ENCODE measurements at regions of chr1 and their contacts with region 1.

Region 1: GRCh38 chr1:186076006-186076405 is 299.0 kb downstream of the TPR start:
- DNase-seq: no peak
- H3K4me3 ChIP-seq: no peak overlapping the region
- H3K27ac ChIP-seq: no peak overlapping the region
- H3K27me3 ChIP-seq: no peaks in the 10 kb centered on the region
- CTCF ChIP-seq: no peak

Region 2: DNA sequence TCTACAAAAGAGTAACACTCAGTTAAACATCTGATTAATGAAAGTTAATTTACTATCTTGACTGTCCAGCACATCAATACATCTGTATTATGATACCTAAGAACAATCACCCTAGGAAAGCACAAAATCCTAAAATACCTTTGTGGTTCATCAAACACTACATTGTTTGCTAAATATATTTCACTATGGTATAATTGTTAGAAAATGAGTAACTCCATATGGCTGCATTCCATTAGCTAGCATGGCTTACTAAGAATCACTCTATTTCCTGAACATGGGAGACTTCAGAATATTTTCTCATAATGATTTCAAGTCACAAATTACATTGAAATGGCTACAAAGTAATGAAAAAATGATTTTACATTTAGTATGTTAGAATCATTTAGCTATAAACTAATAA is 931.8 kb before region 1 on chr1:
- CTCF ChIA-PET with region 1: interaction called, 12 read pairs
- POLR2A ChIA-PET with region 1: no interaction called
- DNase-seq: peak; percentile 10
- H3K4me3 ChIP-seq: no peak overlapping the region
- H3K27ac ChIP-seq: no peak overlapping the region
- H3K27me3 ChIP-seq: no peaks in the 10 kb centered on the region
- CTCF ChIP-seq: no peak

Region 3: DNA sequence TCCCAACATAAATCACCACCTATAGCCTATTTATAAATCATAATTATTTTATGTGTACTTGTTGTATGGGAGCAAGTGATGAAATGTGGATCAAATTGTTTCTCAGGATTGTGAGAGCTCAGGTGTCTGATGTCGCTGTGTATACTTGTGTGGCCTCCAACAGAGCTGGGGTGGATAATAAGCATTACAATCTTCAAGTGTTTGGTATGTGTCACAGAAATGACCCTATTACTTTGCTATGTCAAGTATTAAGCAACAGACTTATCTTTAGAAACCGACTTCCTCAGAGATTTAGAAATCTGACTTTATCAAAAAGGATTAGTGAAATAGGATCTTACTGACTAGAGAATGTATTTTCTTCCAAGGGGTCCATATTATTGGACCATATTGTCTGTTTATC is 18.2 kb after region 1 on chr1:
- CTCF ChIA-PET with region 1: no interaction called
- POLR2A ChIA-PET with region 1: no interaction called
- DNase-seq: no peak
- H3K4me3 ChIP-seq: no peak overlapping the region
- H3K27ac ChIP-seq: no peak overlapping the region
- H3K27me3 ChIP-seq: no peaks in the 10 kb centered on the region
- CTCF ChIP-seq: no peak

Region 4: DNA sequence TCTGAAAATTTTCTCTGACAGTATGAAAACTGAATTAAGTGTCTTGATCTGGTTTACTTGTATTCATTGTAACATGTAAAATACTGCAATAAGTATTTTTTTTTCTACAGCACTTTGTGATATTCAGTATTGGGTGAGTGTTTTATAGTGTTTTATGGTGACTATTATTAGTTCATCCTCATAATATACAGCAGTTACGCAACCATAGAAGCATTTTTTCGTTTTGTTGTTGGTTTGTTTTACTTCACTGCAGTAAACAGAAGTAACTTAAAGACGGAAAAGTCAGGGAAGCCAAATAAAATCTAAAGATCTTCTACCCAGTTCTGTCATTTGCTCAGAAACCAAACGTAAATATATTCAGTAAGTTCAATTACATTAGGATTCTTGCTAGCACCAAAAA is 49.0 kb after region 1 on chr1:
- CTCF ChIA-PET with region 1: no interaction called
- POLR2A ChIA-PET with region 1: no interaction called
- DNase-seq: no peak
- H3K4me3 ChIP-seq: no peak overlapping the region
- H3K27ac ChIP-seq: no peak overlapping the region
- H3K27me3 ChIP-seq: no peaks in the 10 kb centered on the region
- CTCF ChIP-seq: no peak

Region 5: GRCh38 chr1:186330758-186331157 is 254.8 kb after region 1 on chr1:
- CTCF ChIA-PET with region 1: no interaction called
- POLR2A ChIA-PET with region 1: no interaction called
- DNase-seq: no peak
- H3K4me3 ChIP-seq: no peak overlapping the region
- H3K27ac ChIP-seq: no peak overlapping the region
- H3K27me3 ChIP-seq: no peaks in the 10 kb centered on the region
- CTCF ChIP-seq: peak; percentile 52